PC-3 (cell line): ENCODE measurements at regions of chr11 and their contacts with region 1.

Region 1: DNA sequence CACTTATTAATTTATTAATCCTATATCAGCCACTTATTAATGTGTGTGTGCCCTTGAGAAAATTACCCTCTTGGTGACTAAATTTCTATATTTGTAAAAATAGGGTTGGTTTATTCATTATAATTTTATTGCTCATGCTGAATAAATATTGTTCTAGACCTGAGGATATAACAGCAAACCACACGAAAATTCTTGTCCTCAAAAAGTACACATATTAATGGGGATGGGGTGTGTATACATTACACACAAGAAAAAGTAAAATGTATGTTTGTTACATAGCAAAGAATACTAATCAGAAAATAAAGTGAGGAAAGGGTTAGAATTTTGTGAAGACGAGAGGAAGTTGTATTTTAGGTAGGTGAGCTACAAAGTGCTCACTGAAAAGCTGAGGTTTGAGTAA is 1068.9 kb upstream of the RAG2 start:
- DNase-seq: peak; percentile 59
- ATAC-seq: peak; percentile 92
- H3K4me3 ChIP-seq: no peak overlapping the region
- H3K27ac ChIP-seq: peak overlapping the region; percentile 59
- H3K4me1 ChIP-seq: peaks cover 14% of the 10 kb centered on the region
- H3K27me3 ChIP-seq: no peaks in the 10 kb centered on the region
- CTCF ChIP-seq: no peak

Region 2: DNA sequence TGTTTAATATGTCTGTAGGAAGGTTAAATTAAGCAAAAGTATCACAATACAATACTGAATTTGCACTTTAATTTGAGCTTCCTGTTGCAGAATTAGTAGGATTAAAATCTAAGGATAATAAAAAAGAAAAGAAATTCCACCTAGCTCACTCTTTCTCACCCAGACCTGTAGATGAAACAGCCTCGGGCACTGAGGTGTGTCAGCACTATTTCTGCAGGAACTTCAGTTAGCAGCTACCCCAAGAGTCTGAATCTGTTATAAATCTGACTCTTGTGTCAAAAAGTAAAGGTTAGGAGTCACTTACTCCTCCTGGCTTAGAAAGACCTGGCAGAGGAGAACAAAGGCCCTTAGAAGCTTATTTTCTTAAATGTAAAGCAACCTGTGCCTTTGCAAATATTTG is 605.5 kb before region 1 on chr11:
- CTCF ChIA-PET with region 1: no interaction called
- POLR2A ChIA-PET with region 1: no interaction called
- intact Hi-C with region 1: no loop called
- DNase-seq: peak; percentile 3
- ATAC-seq: no peak
- H3K4me3 ChIP-seq: no peak overlapping the region
- H3K27ac ChIP-seq: no peak overlapping the region
- H3K4me1 ChIP-seq: no peaks in the 10 kb centered on the region
- H3K27me3 ChIP-seq: no peaks in the 10 kb centered on the region
- CTCF ChIP-seq: no peak

Region 3: DNA sequence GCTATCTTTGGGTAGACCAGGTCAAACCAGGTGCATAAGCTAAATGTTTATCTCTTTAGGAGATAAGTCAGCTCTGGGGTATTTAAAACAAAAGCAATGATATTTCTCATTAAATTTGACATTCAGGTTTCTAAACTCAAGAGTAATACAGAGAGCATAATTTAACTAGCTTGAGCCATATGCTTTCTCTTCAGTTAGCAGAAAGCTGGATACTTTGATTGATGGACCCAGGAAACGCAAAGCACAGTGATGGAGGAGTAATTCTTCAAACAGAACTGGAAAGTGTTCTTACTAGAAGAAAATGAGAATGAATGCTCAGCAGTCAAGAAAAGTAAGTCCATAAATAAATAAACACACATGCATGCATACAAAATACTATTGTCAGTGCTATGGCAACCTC is 183.2 kb before region 1 on chr11:
- CTCF ChIA-PET with region 1: no interaction called
- POLR2A ChIA-PET with region 1: no interaction called
- intact Hi-C with region 1: no loop called
- DNase-seq: no peak
- ATAC-seq: no peak
- H3K4me3 ChIP-seq: no peak overlapping the region
- H3K27ac ChIP-seq: peak overlapping the region; percentile 47
- H3K4me1 ChIP-seq: peaks cover 11% of the 10 kb centered on the region
- H3K27me3 ChIP-seq: no peaks in the 10 kb centered on the region
- CTCF ChIP-seq: no peak

Region 4: DNA sequence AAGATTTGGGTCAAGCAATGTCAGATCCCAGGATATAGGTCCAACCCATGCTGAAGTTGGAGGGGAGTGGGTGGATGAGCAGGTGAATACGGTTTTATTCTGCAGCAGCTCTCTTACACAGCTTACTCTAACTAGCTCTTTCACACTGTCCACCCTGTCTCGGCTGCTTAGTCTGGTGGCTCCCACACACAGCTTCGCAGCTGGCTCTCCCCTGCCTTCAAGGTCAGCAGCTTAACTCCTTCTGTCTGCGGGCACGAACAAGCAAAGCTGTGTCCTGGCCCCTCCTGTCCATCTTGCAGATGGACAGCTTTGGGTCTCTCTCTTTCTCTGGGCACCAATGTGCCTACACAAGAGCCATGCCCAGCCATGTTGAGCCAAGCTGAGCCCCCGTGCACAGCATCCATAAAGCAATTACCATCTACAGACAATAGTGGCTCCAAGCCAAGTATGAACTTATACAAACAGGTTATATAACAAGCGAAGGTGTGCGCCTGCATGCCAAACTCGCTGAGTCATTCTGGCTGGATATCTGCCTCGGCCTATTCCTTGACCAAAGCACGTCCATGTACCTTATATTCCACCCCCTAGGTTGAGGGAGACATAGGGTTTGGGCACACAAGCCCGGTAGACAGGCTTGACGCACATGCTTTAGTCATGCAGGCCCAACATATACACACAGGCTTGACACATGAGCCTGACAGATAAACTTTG is 238.9 kb after region 1 on chr11:
- CTCF ChIA-PET with region 1: no interaction called
- POLR2A ChIA-PET with region 1: no interaction called
- intact Hi-C with region 1: loop called (anchors 1 kb)
- DNase-seq: peak; percentile 91
- ATAC-seq: peak; percentile 93
- H3K4me3 ChIP-seq: no peak overlapping the region
- H3K27ac ChIP-seq: no peak overlapping the region
- H3K4me1 ChIP-seq: peaks cover 6% of the 10 kb centered on the region; the same call in 1 of the 2 replicates
- H3K27me3 ChIP-seq: no peaks in the 10 kb centered on the region
- CTCF ChIP-seq: no peak

Region 5: GRCh38 chr11:37926772-37927171 is 259.8 kb after region 1 on chr11:
- CTCF ChIA-PET with region 1: no interaction called
- POLR2A ChIA-PET with region 1: no interaction called
- intact Hi-C with region 1: loop called (anchors 5 kb)
- DNase-seq: peak; percentile 27
- ATAC-seq: peak; percentile 77
- H3K4me3 ChIP-seq: no peak overlapping the region
- H3K27ac ChIP-seq: no peak overlapping the region
- H3K4me1 ChIP-seq: peaks cover 9% of the 10 kb centered on the region
- H3K27me3 ChIP-seq: no peaks in the 10 kb centered on the region
- CTCF ChIP-seq: no peak